T-cell (primary cell): ENCODE measurements at regions of chr6 and their contacts with region 1.

Region 1: GRCh38 chr6:82196161-82196560 is 51.4 kb downstream of the IBTK start:
- DNase-seq: no peak
- ATAC-seq: no peak
- H3K4me3 ChIP-seq: no peak overlapping the region
- H3K4me3 Mint-ChIP-seq: no peak overlapping the region
- H3K27ac ChIP-seq: no peak overlapping the region
- H3K27ac Mint-ChIP-seq: no peak overlapping the region
- H3K4me1 ChIP-seq: no peaks in the 10 kb centered on the region
- H3K4me1 Mint-ChIP-seq: no peaks in the 10 kb centered on the region
- H3K27me3 ChIP-seq: no peaks in the 10 kb centered on the region
- H3K27me3 Mint-ChIP-seq: no peaks in the 10 kb centered on the region

Region 2: DNA sequence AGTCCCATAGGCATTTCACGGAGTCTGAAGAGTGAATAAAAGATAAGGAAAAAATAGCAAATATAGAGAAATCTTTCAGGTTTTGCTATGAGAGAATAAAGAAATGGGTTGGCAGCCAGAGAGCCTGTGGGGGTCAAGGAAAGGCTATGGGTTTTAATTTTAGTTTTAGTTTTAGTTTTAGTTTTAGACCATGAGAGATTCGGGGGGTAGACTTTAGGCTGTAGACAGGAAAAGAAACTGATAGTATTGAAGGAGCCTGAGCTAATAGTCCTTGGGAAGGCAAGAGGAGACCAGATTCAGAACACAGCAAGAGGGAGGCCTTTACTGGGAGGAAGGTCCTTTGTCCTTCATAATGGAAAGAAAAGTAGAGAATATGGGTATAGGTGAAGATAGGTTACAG is 890.6 kb after region 1 on chr6:
- CTCF ChIA-PET with region 1: interaction called in 1 of 2 experiments, 3 read pairs
- POLR2A ChIA-PET with region 1: interaction called in 1 of 2 experiments, 14 read pairs
- DNase-seq: no peak
- ATAC-seq: no peak
- H3K4me3 ChIP-seq: no peak overlapping the region
- H3K4me3 Mint-ChIP-seq: no peak overlapping the region
- H3K27ac ChIP-seq: no peak overlapping the region
- H3K27ac Mint-ChIP-seq: no peak overlapping the region
- H3K4me1 ChIP-seq: no peaks in the 10 kb centered on the region
- H3K4me1 Mint-ChIP-seq: peaks cover 29 to 35% (median 30%) of the 10 kb centered on the region in 3 donors
- H3K27me3 ChIP-seq: no peaks in the 10 kb centered on the region
- H3K27me3 Mint-ChIP-seq: no peaks in the 10 kb centered on the region